ENCODE measurements at regions of chr5 and their contacts with region 1.

Region 1: DNA sequence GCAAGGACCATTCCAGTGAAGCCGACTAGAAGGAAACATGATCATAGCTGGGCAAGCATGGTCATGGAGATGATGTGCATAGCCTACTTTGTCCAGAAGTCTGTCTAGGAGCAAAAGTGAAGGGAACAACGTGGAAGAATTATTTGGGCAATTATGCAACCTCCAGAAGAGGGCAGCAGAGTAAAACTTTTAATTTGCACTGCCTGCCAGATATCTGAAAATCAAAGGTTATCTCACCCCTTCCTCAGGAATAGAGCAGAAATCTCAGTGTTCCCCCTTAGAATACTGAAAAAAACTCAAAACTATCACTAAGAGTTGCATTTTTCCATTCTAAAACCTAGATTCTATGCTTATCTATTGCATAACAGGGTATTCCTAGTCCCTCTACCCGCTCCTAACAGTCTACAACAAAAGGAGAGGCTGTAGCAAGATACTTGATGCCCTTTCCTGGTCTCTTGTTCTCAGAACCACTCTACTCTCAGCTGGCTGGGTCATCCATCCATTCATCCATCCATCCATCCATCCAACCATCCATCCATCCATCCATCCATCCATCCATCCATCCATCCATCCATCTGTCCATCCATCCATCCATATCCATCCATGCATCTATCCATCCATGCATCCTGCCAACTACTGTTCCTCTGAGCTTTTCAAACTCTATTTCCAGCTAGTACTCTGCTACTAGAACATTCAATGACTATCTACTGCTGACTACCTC is 8.4 kb upstream of the SETD9 start:
- DNase-seq: no peak
- H3K4me3 ChIP-seq: no peak overlapping the region
- H3K27ac ChIP-seq: no peak overlapping the region
- H3K4me1 ChIP-seq: no peaks in the 10 kb centered on the region
- H3K27me3 ChIP-seq: no peaks in the 10 kb centered on the region
- CTCF ChIP-seq: peak in 2 of 3 donors; percentile 32 to 59
- EP300 ChIP-seq: no peak
- POLR2A ChIP-seq: no peak

Region 2: GRCh38 chr5:56763711-56764466 is 137.1 kb before region 1 on chr5:
- intact Hi-C with region 1: no loop called
- DNase-seq: no peak
- H3K4me3 ChIP-seq: no peak overlapping the region
- H3K27ac ChIP-seq: no peak overlapping the region
- H3K4me1 ChIP-seq: peaks cover 2% of the 10 kb centered on the region
- H3K27me3 ChIP-seq: no peaks in the 10 kb centered on the region
- CTCF ChIP-seq: no peak
- EP300 ChIP-seq: no peak
- POLR2A ChIP-seq: no peak

Region 3: DNA sequence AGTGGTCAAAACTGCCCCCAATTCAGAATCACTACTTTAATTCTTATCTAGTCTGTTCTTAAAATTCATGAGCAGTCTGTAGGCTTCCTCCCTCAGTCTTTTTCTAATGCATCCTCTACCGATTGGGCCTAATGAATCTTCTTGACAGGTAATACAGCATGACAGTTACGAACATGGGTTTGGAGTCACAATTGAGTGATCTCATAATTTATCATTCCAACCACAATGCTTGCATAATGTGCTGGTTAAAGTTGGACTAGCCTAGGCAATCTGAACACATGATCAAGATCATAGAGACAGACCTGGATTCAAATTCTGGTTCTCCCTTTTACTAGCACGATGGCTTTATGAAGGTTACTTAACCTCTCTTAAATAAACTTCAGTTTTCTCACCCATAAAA is 24.7 kb before region 1 on chr5:
- intact Hi-C with region 1: loop called in 1 of 4 experiments (anchors 2 kb)
- DNase-seq: no peak
- H3K4me3 ChIP-seq: no peak overlapping the region
- H3K27ac ChIP-seq: no peak overlapping the region
- H3K4me1 ChIP-seq: no peaks in the 10 kb centered on the region
- H3K27me3 ChIP-seq: no peaks in the 10 kb centered on the region
- CTCF ChIP-seq: no peak
- EP300 ChIP-seq: no peak
- POLR2A ChIP-seq: no peak